ENCODE measurements at regions of chr20 and their contacts with region 1.

Region 1: DNA sequence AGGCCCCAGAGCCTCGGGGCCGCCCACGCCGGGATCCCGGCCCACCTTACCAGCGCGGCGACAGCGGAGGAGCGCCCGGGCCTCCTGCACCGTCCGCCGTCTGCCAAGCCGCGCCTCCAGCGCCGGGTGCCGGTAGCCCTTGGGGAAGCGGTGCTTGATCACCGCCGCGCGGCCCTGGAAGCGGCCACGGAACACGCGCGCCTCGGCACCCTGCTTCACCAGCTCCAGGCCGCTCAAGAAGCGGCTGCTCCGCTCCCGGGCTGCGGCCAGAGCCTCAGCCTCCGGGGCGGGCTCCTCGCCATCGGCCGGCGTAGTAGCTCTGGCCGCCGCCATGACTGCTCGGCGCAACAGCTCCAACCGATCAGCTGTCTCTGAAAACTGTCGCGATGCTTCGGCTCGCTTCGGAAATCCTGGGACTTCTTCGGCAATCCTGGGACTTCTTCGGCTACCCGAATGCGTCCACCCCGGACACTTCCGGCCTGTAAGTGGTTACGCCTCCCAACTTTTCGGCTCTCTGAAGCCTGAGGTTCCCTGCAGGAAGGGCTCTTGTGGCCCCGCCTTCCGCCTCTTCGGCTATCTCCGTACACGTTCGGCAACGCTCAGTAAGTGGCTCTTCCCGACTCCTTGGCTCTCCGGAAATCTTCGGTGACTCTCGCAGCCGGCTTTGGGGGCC is at the start of gene TP53RK:
- DNase-seq: peak; percentile 98
- ATAC-seq: peak; percentile 98
- H3K4me3 Mint-ChIP-seq: peak within 1 kb of the TSS; percentile 91
- H3K27ac Mint-ChIP-seq: peak within 1 kb of the TSS; percentile 95
- H3K4me1 Mint-ChIP-seq: peaks cover 39% of the 10 kb centered on the region
- H3K27me3 Mint-ChIP-seq: no peaks in the 10 kb centered on the region
- total RNA-seq, gene TP53RK: 11.2 to 12.1 TPM

Region 2: DNA sequence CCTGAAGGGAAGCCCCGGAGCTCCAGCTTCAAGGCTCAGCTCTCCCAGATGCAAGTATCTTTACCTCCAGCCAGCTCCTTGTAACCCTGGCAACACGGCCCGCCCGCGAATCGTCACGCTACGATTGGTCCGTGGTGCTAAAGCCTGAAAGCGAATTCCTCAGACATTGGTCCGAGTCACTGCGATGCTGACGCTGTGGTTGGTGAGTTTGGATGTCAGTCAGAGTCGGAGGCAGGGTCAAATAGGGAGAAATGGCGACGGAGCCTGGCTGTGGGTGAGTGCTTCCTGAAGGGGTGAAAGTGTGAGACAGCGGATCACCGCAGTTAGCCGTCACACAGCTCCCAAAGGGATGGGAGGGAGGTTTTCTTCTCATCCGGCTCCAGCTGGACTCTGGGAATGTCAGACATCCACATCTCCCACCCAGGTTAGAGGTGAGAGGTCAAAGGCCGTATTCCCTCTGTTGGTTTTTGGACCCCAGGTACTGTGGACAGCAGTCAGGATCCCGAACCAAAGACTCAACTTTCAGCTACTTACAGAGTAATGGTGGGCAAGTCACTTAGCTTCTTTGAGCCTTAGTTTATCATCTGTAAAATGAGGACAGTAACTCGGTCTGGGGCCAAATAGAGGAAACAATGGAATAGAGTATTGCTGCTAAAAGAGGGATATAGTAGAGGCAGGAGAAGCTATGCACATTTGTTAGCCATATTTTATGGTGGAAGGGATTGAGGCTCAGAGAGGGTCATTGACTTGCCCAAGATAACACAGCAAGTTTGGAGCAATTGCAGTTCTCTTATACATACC is 808.0 kb before region 1 on chr20 and contains the start of gene ZSWIM1:
- CTCF ChIA-PET with region 1: no interaction called
- POLR2A ChIA-PET with region 1: no interaction called
- intact Hi-C with region 1: loop called in 1 of 2 experiments (anchors 5 kb)
- DNase-seq: peak; percentile 99
- ATAC-seq: peak; percentile 98
- H3K4me3 Mint-ChIP-seq: peak within 1 kb of the TSS; percentile 94
- H3K27ac Mint-ChIP-seq: peak within 1 kb of the TSS; percentile 95
- H3K4me1 Mint-ChIP-seq: peaks cover 42% of the 10 kb centered on the region
- H3K27me3 Mint-ChIP-seq: no peaks in the 10 kb centered on the region
- total RNA-seq, gene ZSWIM1: 9.4 to 10.7 TPM

Region 3: DNA sequence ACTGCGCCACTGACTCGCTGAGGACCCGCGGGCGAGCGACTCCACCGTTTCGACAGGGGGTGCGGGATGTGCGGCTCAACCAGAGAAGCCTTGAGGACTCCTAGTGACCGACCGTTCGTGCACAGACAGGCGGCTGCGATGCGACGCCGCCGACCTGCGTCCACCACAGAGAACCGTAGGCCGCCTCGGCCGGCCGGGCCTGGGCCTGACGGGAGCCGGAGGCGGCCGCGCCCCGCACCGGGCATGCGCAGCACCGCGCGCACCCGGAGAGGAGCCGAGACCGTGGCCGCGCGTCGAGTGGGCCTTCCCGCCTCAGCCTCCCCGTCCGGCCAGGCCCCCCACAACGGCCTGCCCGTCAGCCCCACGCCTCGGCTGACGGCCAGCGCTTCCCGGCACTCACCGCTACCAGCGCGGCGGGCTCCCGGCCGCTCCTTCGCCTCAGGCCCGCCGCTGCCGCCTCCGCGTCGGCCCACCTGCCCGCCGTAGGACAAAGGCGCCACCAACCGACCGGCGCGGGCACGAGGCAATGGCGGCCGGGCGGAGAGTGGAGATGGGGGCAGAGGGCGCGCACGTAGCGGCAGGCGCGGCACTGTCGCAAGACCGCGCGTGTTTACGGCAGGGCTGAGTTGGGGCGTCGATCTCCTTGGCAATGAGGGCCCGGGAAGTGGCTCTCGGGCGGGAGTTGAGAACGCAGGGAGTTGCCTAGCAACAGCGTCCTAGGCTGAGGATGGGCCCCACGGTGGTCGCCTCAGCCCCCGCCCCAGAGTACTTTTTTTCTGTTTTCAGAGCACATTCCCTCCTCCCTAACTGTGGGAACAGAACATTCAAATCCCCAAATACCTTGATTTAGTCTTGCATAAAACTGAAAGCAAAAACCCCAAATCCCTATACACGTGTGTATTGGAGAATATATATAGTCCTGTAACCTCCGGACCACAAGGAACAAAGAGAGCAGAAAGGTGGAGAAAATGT is 599.5 kb before region 1 on chr20 and contains the start of gene NCOA5:
- CTCF ChIA-PET with region 1: no interaction called
- POLR2A ChIA-PET with region 1: no interaction called
- intact Hi-C with region 1: loop called in 1 of 2 experiments (anchors 1 kb)
- DNase-seq: peak; percentile 97
- ATAC-seq: peak; percentile 87
- H3K4me3 Mint-ChIP-seq: peak within 1 kb of the TSS; percentile 86
- H3K27ac Mint-ChIP-seq: peak within 1 kb of the TSS; percentile 88
- H3K4me1 Mint-ChIP-seq: peaks cover 46% of the 10 kb centered on the region
- H3K27me3 Mint-ChIP-seq: no peaks in the 10 kb centered on the region
- total RNA-seq, gene NCOA5: 17.9 to 18.8 TPM

Region 4: DNA sequence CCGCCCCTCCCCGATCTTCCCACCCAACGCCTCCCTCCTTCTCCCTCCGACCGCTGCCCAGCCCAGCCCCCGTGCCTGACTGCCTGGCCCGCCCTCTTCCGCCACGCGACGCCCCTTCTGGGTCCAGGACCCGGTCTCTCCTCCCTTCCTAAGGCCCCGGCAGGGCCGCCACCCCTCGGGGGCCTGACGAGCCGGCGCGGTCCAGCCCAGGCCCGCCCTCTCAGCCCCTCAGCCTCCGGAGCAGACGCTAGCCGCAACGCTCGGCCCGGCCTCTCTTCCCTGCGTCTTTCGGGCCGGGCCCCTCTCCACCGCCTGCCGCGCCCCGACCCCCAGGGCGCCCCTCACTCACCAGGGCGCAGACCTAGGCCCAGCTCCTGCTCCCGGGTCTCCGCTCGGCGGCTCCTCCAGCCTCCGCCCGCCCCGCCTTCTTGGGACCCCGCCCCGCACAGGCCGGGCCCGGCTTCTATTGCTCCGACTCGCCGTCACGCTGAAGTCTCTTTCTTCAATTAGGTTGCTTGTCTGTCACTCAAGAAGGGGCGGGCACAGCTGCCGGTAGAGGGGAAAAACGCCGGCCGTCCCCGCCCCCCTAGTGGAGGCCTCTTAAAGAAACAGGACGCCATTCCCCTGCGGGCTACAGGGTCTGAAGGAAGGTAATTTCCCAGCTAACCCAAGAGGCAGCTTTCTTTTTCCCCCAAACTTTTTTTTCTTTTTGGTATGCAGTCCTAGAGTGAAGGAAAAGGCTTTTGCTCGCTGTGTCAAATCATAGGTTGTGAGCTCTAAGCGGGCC is 282.8 kb before region 1 on chr20 and contains the start of gene ELMO2:
- CTCF ChIA-PET with region 1: interaction called, 4 read pairs
- POLR2A ChIA-PET with region 1: no interaction called
- intact Hi-C with region 1: loop called (anchors 1 to 2 kb)
- DNase-seq: peak; percentile 98
- ATAC-seq: peak; percentile 85
- H3K4me3 Mint-ChIP-seq: peak within 1 kb of the TSS; percentile 88
- H3K27ac Mint-ChIP-seq: peak within 1 kb of the TSS; percentile 85
- H3K4me1 Mint-ChIP-seq: peaks cover 65% of the 10 kb centered on the region
- H3K27me3 Mint-ChIP-seq: no peaks in the 10 kb centered on the region
- total RNA-seq, gene ELMO2: 47.4 to 54.6 TPM

Region 5: DNA sequence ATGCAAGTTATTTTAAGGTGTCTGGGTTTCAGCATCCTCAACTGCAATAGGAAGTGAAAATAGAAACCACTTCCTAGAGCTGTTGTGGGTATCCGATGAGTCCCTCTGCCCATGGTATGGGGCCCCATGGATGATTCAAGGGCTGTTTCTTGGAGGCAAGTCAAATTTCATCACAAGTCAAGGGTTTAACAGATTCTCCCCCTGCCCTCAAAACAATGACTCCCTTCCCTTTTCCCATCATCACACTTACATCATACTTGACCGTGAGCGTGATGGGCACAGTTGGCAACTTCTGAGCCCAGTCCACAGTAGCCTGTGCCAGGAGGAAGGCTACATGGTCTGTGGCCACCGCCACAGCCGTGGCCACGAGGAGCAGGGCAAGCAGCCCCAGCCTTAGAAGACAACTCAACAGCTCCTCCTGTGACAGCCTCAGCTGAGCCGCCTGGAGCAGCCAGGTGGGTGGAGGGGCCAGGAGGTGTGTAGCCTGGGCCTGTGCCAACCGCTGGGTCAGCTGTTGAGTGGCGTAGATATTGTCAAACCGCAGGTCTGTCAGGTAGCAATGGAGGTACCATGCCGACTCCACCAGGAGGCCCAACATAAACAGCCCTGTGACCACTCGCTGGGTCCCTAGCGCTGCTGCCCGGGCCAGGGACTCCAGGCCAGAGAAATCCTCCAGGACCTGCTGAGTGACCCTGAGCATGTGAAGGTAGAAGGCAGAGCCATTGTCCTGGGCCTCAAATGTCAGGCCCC is 144.0 kb before region 1 on chr20:
- CTCF ChIA-PET with region 1: interaction called, 4 read pairs
- POLR2A ChIA-PET with region 1: interaction called, 3 read pairs
- intact Hi-C with region 1: loop called in 1 of 2 experiments (anchors 1 kb)
- DNase-seq: peak; percentile 75
- ATAC-seq: peak; percentile 82
- H3K4me3 Mint-ChIP-seq: peak overlapping the region; percentile 47
- H3K27ac Mint-ChIP-seq: peak overlapping the region; percentile 91
- H3K4me1 Mint-ChIP-seq: peaks cover 10% of the 10 kb centered on the region
- H3K27me3 Mint-ChIP-seq: peaks cover 12% of the 10 kb centered on the region

Region 6: DNA sequence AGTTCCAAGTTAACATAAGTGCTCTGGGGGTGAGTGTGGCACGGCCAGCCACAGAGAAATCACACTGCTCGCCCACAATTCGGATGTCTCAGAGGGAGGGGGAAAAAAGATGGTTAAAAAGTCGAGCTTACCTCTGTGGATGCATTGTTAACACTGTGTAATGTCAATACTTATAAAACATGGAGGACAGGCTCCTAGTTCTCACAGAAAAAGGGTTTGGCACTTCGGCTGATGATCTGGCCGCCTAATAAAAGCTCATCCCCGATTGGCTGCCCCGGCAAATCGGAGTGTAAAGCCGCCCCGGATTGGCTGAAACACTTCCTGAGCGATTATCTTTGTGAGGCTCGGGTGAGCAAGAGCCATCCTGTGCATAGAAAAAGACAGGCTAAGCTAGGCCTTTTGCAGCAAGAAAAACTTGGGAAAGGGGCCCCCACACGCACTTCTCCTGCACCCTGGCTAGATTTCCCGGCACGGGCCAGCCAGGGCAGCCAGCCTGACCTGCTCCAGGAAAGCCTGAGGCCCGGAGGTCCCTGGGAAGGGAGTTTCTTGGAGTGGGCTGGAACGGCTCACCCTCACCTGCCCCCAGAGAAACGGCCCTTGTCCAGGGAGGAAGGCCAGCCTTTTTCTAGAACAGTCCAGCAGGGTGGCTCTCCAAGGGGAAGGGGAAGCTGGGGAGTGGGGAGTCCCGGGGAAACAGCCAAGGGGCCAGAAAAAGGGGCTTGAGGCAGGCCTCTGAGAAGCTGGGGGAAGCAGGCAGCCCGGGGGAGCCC is 667.5 kb after region 1 on chr20 and contains the start of gene ZMYND8:
- CTCF ChIA-PET with region 1: no interaction called
- POLR2A ChIA-PET with region 1: no interaction called
- intact Hi-C with region 1: loop called in 1 of 2 experiments (anchors 1 kb)
- DNase-seq: peak; percentile 94
- ATAC-seq: peak; percentile 85
- H3K4me3 Mint-ChIP-seq: peak within 1 kb of the TSS; percentile 77
- H3K27ac Mint-ChIP-seq: peak within 1 kb of the TSS; percentile 98
- H3K4me1 Mint-ChIP-seq: peaks cover 54% of the 10 kb centered on the region
- H3K27me3 Mint-ChIP-seq: no peaks in the 10 kb centered on the region
- total RNA-seq, gene ZMYND8: 33.7 to 50.3 TPM

Measured in activated CD4-positive, alpha-beta T cell treated with anti-CD3 and anti-CD28 coated beads for 36 hours (primary cell).